K562 (cell line): ENCODE measurements at regions of chr11 and their contacts with region 1.

Region 1: GRCh38 chr11:125553357-125553756 is 15.9 kb upstream of the EI24 start:
- DNase-seq: no peak
- ATAC-seq: peak; percentile 29
- H3K4me3 ChIP-seq: no peak overlapping the region
- H3K27ac ChIP-seq: peak overlapping the region; percentile 69
- H3K4me1 ChIP-seq: peaks cover 19 to 58% of the 10 kb centered on the region in 2 experiments
- H3K27me3 ChIP-seq: no peaks in the 10 kb centered on the region
- CTCF ChIP-seq: no peak
- EP300 ChIP-seq: no peak
- POLR2A ChIP-seq: no peak
- RAD21 ChIP-seq: no peak

Region 2: DNA sequence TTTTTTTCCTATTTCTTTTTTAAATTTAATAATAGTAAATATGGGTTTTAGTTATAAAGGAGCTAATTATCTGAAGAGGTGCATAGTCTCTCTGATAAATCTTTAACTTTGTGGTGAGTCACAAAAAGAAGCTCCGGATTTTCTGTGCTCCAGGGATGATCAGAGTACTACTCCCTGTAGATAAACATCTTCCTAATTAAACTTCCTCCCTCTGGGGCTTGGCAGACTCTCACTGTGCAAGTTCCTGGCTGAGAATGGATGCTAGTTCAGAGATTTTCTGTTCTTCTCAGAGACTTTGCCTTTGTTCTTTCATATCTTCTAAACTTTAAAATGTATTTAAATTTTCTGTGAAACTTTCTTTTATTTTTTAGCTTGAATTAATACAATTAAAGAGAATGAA is 1512.1 kb before region 1 on chr11 and contains the start of gene OR10G7:
- CTCF ChIA-PET with region 1: no interaction called
- POLR2A ChIA-PET with region 1: no interaction called
- in situ Hi-C with region 1: no loop called
- intact Hi-C with region 1: no loop called
- DNase-seq: no peak
- ATAC-seq: no peak
- H3K4me3 ChIP-seq: no peak within 1 kb of the TSS
- H3K27ac ChIP-seq: no peak within 1 kb of the TSS
- H3K4me1 ChIP-seq: no peaks in the 10 kb centered on the region
- H3K27me3 ChIP-seq: no peaks in the 10 kb centered on the region
- CTCF ChIP-seq: no peak
- EP300 ChIP-seq: no peak
- POLR2A ChIP-seq: no peak
- RAD21 ChIP-seq: no peak
- polyA plus RNA-seq, gene OR10G7: not detected

Region 3: DNA sequence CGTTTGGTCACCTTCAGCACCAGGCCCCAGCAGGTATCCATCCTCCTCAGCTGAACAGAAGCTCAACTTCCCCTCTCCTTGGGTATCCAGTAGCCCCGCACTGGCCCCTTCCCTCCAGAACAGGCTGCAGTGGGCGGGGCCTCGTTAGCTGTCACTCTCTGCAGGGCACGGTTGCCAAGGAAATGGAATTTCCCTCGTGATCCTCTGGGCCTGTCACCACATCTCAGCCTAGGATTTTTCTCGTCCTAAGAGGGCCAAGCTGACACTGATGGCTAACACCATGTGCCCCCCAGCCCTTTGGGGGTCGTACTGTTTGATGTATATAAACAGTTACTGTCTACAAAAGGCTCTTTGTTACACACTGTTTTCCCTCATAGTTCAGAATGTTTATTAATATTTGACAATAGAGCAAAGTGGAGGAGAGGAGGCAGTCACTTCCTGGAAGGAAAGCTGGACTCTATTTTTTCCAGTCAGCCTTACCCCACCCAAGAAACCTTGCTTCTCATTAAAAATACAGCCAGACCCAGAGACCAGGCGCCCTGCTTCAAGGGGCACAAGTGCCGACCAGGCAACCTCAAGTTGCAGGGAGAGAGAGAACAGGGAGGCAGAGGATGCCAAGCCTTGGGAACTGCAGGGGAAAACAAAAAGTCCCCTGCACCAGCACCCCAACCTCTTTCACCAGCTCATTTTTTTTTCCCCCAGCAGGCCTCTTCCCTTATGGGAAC is 101.8 kb before region 1 on chr11:
- CTCF ChIA-PET with region 1: no interaction called
- POLR2A ChIA-PET with region 1: no interaction called
- in situ Hi-C with region 1: no loop called
- intact Hi-C with region 1: loop called (anchors 5 kb)
- DNase-seq: peak; percentile 46 to 63 (median 54)
- ATAC-seq: peak; percentile 77
- H3K4me3 ChIP-seq: no peak overlapping the region
- H3K27ac ChIP-seq: no peak overlapping the region
- H3K4me1 ChIP-seq: peaks cover 24 to 28% of the 10 kb centered on the region in 2 experiments
- H3K27me3 ChIP-seq: no peaks in the 10 kb centered on the region
- CTCF ChIP-seq: no peak
- EP300 ChIP-seq: no peak
- POLR2A ChIP-seq: no peak
- RAD21 ChIP-seq: no peak

Region 4: DNA sequence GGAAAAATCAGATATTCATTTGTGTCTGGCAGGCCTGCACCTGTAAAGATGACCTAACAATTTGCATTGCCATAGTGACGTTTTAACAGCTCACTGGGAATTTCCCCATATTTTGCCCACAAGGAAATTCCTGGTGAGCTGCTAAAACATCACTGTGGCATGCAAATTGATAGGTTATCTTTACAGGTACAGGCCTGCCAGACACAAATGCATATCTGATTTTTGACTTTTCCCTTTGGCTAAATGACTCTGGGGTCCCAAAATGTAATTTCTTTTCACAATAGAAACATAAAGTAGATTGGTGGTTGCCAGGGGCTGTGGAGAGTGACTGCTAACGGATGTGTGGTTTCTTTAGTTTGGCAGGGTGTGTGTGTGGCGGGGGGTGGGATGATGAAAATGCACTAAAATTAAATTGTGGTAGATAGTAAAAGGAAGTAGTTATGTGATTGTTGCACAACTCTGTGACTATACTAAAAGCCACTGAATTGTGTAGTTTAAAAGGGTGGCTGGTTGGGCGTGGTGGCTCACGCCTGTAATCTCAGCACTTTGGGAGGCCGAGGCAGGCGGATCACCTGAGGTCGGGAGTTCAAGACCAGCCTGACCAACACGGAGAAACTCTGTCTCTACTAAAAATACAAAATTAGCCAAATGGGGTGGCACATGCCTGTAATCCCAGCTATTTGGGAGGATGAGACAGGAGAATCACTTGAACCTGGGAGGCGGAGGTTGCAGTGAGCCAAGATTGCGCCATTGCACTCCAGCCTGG is 38.8 kb before region 1 on chr11:
- CTCF ChIA-PET with region 1: no interaction called
- POLR2A ChIA-PET with region 1: interaction called, 4 read pairs
- in situ Hi-C with region 1: no loop called
- intact Hi-C with region 1: loop called (anchors 5 kb)
- DNase-seq: no peak
- ATAC-seq: peak; percentile 29
- H3K4me3 ChIP-seq: no peak overlapping the region
- H3K27ac ChIP-seq: no peak overlapping the region
- H3K4me1 ChIP-seq: peaks cover 0 to 25% of the 10 kb centered on the region in 2 experiments; a peak in 4 of 5 replicates
- H3K27me3 ChIP-seq: no peaks in the 10 kb centered on the region
- CTCF ChIP-seq: no peak
- EP300 ChIP-seq: peak; percentile 63; the same call in 1 of the 2 replicates
- POLR2A ChIP-seq: no peak
- RAD21 ChIP-seq: no peak

Region 5: DNA sequence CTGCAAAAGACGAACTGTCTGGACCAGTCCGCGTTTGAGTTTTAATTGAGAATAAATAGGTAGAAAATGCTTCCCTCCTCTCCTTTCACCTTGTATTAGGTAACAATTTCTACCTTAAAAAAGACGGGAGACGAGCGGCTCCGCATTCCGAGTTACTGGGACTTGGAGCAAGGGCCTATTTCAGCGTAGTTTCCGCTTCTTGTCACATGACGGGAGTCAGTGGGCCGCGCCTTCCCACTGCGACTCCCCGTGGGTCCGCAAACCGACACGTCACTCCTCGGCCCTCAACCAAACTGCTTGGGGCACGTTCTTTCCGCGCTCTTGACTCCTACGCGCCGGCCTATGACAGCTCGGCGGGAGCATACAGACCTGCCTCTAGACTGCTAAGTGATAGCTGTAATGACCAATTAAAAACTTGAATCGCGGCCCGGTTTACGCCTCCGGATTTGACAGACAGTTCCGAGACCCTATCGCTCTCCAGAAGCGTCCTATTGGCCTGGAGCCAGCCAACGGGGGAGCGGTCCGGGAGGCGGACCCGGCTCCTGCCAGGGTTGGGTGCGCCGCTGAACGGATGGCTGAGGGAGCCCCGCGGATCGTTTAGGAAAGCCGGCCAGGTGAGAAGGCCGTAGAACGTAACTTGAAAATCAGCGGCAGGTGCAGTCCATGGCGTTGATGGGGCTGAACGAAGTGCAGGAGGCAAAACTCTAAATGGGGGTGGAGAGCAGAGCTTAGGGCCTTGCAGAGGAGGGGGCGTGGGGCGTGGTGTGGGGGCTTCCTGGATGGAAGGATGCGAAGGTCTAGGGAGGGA is 39.2 kb after region 1 on chr11 and contains the start of gene STT3A:
- CTCF ChIA-PET with region 1: no interaction called
- POLR2A ChIA-PET with region 1: no interaction called
- in situ Hi-C with region 1: no loop called
- intact Hi-C with region 1: loop called (anchors 1 kb)
- DNase-seq: peak; percentile 96 to 99 (median 98)
- ATAC-seq: peak; percentile 95
- H3K4me3 ChIP-seq: peak within 1 kb of the TSS; percentile 84
- H3K27ac ChIP-seq: peak within 1 kb of the TSS; percentile 96
- H3K4me1 ChIP-seq: peaks cover 23 to 25% of the 10 kb centered on the region in 2 experiments
- H3K27me3 ChIP-seq: no peaks in the 10 kb centered on the region
- CTCF ChIP-seq: no peak
- EP300 ChIP-seq: peak; percentile 49; the same call in 1 of the 2 replicates
- POLR2A ChIP-seq: peak; percentile 87
- RAD21 ChIP-seq: no peak
- polyA plus RNA-seq, gene STT3A: 197 to 330 TPM

Region 6: DNA sequence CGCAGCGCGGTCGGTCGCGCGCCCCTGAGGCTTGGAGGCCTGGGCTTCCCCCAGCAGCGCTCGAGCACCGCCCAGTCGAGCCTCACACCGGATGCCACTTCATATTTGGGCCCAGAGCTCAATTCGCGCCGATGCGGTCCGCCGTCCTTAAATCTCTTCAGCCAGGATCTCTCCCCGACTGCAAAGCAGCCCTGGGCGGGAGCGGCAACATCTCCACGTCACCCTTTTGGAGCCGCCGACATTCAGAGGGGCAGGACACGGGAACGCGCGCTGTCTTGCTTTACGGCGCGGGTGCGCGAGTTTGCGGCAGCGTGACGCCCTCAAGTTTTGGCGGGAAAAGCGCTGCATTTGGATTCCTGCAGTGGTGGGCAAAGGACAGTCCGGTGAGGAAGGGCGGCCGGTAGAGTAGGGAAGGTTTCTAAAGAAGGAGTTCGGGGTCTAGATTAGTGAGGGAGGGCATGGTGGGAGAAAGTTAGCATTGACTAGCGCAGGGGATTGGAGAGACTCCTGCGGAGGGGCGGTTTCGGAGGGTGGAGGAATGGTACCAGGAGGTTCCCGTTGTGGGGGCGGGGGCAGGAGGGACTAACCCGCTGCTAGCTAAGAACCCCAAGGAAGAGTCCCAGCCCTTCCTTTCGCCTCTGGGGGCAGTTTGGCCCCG is 72.4 kb after region 1 on chr11:
- CTCF ChIA-PET with region 1: no interaction called
- POLR2A ChIA-PET with region 1: no interaction called
- in situ Hi-C with region 1: no loop called
- intact Hi-C with region 1: loop called (anchors 5 kb)
- DNase-seq: peak; percentile 77 to 97 (median 82)
- ATAC-seq: peak; percentile 89
- H3K4me3 ChIP-seq: peak overlapping the region; percentile 80
- H3K27ac ChIP-seq: peak overlapping the region; percentile 93
- H3K4me1 ChIP-seq: peaks cover 9 to 10% of the 10 kb centered on the region in 2 experiments
- H3K27me3 ChIP-seq: no peaks in the 10 kb centered on the region
- CTCF ChIP-seq: no peak
- EP300 ChIP-seq: no peak
- POLR2A ChIP-seq: peak; percentile 98
- RAD21 ChIP-seq: no peak